ENCODE measurements at regions of chr15 and their contacts with region 1.

Region 1: DNA sequence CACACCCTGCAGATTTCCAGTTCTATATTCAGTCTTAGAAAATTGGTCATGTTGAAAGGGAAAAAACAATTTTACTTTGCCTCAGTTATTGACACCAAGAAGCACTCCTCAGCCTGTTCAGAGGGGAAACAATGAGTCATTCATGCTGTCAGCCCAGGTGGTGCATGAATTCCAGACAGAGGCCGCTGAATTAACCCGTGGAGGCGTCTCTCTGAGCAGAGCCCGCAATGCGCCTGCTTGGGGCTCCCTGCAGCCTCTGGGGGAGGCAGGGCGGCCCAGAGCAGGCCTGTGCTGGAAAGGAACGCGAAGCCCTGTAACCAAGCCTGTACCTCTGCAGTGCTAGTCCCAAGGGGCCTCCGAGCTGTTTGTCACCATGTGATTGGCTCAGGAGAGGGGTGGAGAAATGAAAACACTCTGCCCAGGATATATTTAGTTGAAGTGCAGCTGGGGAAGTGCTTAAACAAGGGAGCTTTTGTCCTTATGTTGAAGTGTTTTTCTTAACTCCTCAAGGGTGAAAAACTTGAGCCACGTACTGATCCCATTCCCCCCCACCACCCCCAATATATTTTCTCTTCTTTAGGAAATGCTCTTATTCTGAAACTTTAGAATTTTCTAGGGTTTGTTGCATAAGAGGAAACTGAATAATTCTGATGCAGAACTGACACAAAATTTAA is 68.3 kb upstream of the CHD2 start:
- DNase-seq: peak; percentile 72 to 96 (median 90)
- ATAC-seq: peak; percentile 93
- H3K4me3 ChIP-seq: peak overlapping the region; percentile 15 to 41
- H3K4me3 Mint-ChIP-seq: peak overlapping the region; percentile 72
- H3K27ac ChIP-seq: peak overlapping the region; percentile 67 to 80
- H3K27ac Mint-ChIP-seq: peak overlapping the region; percentile 96
- H3K4me1 ChIP-seq: peaks cover 42% of the 10 kb centered on the region
- H3K4me1 Mint-ChIP-seq: peaks cover 44% of the 10 kb centered on the region
- H3K27me3 ChIP-seq: no peaks in the 10 kb centered on the region
- H3K27me3 Mint-ChIP-seq: no peaks in the 10 kb centered on the region
- CTCF ChIP-seq: no peak

Region 2: GRCh38 chr15:92820236-92821021 is 11.4 kb before region 1 on chr15:
- CTCF ChIA-PET with region 1: interaction called, 10 read pairs
- POLR2A ChIA-PET with region 1: interaction called, 28 read pairs
- intact Hi-C with region 1: loop called (anchors 1 kb)
- DNase-seq: peak; percentile 64 to 94 (median 85)
- ATAC-seq: peak; percentile 88
- H3K4me3 ChIP-seq: peak overlapping the region; percentile 57 to 64
- H3K4me3 Mint-ChIP-seq: peak overlapping the region; percentile 87
- H3K27ac ChIP-seq: peak overlapping the region; percentile 69 to 75
- H3K27ac Mint-ChIP-seq: peak overlapping the region; percentile 94
- H3K4me1 ChIP-seq: peaks cover 47% of the 10 kb centered on the region
- H3K4me1 Mint-ChIP-seq: peaks cover 52% of the 10 kb centered on the region
- H3K27me3 ChIP-seq: no peaks in the 10 kb centered on the region
- H3K27me3 Mint-ChIP-seq: no peaks in the 10 kb centered on the region
- CTCF ChIP-seq: no peak

Region 3: DNA sequence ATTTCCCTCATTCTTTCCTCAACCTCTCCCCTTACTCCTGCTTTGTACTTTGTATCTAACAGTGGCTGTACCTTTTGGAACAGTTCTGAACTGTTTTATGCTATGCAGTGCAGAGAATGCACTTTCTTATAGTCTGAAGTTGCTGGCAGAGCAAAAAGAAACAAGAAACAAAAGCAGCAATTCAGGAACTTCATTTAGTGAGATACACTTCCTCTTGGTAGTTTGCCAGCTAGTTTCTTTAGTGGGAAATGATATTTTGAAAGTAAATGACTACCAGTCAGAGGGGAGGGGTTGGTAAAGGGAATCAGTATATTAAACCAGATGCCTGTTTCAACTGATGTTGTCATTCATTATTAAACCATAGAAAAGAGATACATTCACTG is 13.3 kb after region 1 on chr15:
- CTCF ChIA-PET with region 1: interaction called, 3 read pairs
- POLR2A ChIA-PET with region 1: interaction called, 23 read pairs
- intact Hi-C with region 1: loop called (anchors 1 kb)
- DNase-seq: peak in 2 of 9 experiments; percentile 57 to 79
- ATAC-seq: peak; percentile 34
- H3K4me3 ChIP-seq: peak overlapping the region in 1 of 2 experiments; percentile 4
- H3K4me3 Mint-ChIP-seq: peak overlapping the region; percentile 72
- H3K27ac ChIP-seq: peak overlapping the region; percentile 23 to 46
- H3K27ac Mint-ChIP-seq: peak overlapping the region; percentile 93
- H3K4me1 ChIP-seq: peaks cover 71% of the 10 kb centered on the region
- H3K4me1 Mint-ChIP-seq: peaks cover 75% of the 10 kb centered on the region
- H3K27me3 ChIP-seq: no peaks in the 10 kb centered on the region
- H3K27me3 Mint-ChIP-seq: no peaks in the 10 kb centered on the region
- CTCF ChIP-seq: no peak

Region 4: DNA sequence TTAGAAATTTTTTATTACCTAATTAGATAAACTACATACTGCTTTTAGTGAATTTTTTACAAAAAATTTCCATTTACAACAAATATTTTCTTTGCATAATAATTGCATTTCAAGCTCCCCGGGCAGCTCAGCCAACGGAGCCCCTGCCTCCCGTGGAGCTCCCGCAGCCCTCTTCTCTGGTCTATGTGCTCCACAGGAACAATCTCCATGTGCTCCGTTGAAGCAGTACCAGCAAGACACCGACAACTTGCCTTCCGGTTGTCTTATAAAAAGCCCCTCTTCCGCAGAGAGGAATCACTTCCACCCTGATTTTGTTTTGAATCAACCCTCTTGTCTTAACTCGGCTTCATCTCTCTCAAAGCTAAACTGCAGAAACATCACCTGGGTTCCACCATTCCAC is 21.4 kb after region 1 on chr15:
- CTCF ChIA-PET with region 1: interaction called, 3 read pairs
- POLR2A ChIA-PET with region 1: interaction called, 23 read pairs
- intact Hi-C with region 1: loop called (anchors 1 kb)
- DNase-seq: no peak
- ATAC-seq: no peak
- H3K4me3 ChIP-seq: no peak overlapping the region
- H3K4me3 Mint-ChIP-seq: no peak overlapping the region
- H3K27ac ChIP-seq: no peak overlapping the region
- H3K27ac Mint-ChIP-seq: no peak overlapping the region
- H3K4me1 ChIP-seq: peaks cover 30% of the 10 kb centered on the region
- H3K4me1 Mint-ChIP-seq: peaks cover 32% of the 10 kb centered on the region
- H3K27me3 ChIP-seq: no peaks in the 10 kb centered on the region
- H3K27me3 Mint-ChIP-seq: no peaks in the 10 kb centered on the region
- CTCF ChIP-seq: no peak

Region 5: DNA sequence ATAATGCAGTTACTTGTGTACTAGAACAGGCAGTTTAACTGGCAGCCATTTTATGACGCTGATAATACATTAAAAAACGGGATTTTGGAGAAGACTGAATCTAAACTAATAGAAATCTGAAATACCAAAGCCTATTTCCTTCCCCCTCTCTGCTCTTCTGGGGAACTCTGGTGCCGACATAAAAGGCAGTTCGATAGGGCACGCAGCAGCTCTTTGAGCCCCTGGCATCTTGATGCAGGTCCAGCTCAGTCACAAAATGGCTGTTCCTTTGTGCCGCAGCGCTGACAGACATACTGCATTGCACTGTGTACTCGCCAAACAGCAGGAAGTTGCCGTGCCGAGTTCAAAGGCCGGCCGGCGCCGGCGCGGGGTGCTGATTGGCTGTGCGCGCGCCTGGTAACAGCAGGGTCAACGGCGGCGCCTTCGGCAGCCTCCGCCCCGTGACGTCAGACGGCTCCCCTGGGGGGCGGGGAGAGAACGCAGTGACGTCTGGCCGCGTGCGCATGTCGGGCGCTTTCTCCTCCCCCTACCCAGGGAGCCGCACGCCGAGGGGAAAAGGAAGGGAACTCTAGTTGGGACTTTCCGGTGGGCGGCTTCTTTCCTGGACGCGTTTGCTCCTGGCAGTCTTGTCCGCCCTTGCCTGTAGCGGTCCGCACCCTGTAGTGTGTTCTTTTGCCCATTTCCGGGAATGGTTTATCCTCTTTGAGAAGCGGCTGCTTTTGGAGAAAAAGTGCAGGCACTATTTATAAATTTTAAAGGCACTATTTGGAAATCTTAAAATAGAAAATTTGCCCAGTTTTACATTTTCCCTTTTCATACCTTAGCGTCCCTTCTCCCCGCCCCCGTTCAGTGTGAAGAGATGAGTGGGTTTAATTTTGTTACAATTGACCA is 72.4 kb after region 1 on chr15:
- CTCF ChIA-PET with region 1: interaction called, 8 read pairs
- POLR2A ChIA-PET with region 1: interaction called, 25 read pairs
- intact Hi-C with region 1: loop called in 1 of 2 experiments (anchors 1 kb)
- DNase-seq: peak; percentile 98 to 99 (median 99)
- ATAC-seq: peak; percentile 77
- H3K4me3 ChIP-seq: peak overlapping the region; percentile 75 to 88
- H3K4me3 Mint-ChIP-seq: peak overlapping the region; percentile 94
- H3K27ac ChIP-seq: peak overlapping the region; percentile 95 to 99
- H3K27ac Mint-ChIP-seq: peak overlapping the region; percentile 99
- H3K4me1 ChIP-seq: peaks cover 60% of the 10 kb centered on the region
- H3K4me1 Mint-ChIP-seq: peaks cover 58% of the 10 kb centered on the region
- H3K27me3 ChIP-seq: no peaks in the 10 kb centered on the region
- H3K27me3 Mint-ChIP-seq: no peaks in the 10 kb centered on the region
- CTCF ChIP-seq: no peak

Region 6: GRCh38 chr15:92954578-92954977 is 122.8 kb after region 1 on chr15:
- CTCF ChIA-PET with region 1: no interaction called
- POLR2A ChIA-PET with region 1: no interaction called
- intact Hi-C with region 1: no loop called
- DNase-seq: peak in 2 of 9 experiments; percentile 17 to 34
- ATAC-seq: no peak
- H3K4me3 ChIP-seq: no peak overlapping the region
- H3K4me3 Mint-ChIP-seq: no peak overlapping the region
- H3K27ac ChIP-seq: no peak overlapping the region
- H3K27ac Mint-ChIP-seq: no peak overlapping the region
- H3K4me1 ChIP-seq: peaks cover 3% of the 10 kb centered on the region
- H3K4me1 Mint-ChIP-seq: peaks cover 31% of the 10 kb centered on the region
- H3K27me3 ChIP-seq: no peaks in the 10 kb centered on the region
- H3K27me3 Mint-ChIP-seq: no peaks in the 10 kb centered on the region
- CTCF ChIP-seq: peak; percentile 36

Region 7: DNA sequence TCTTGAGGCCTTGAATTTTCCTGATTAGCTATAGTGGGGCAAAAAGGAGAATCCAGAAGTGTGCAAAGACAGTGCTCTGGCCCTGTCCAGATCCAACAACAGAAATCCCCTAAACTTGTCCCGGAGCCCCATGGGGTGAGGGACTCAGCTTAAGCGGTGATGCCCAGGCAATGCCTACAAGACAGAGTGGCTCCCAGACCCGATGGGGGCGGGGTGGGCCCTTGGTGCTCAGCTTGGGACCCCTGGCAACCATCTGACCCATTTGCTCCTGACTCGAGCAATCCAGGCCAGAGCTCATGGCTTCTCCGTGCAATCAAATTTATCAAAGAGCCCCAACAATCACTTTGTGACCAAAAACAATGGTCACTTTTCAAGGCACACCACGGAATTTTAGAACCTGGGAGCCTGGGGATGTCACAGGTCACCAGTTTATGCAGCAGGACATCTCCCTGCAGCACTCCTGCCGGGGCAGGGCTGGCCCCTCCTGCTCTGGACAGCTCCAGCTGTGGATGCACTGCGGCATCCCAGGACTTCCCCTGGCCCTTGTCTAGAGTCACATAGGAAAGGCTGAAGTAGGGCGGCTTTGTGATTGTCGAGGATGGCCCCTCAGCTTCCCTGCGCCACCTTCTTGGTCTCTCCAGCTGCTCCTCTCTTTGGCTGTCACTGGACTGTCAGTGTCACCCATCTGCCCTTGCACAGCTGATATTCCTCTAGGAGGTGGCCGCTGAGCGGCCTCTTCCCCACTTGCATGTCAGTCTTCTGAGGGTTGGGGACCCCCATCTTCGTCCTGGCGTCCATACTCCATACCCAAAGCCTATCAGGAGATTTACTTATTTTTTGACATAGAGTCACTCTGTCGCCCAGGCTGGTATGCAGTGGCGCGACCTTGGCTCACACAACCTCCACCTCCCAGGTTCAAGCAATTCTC is 228.8 kb after region 1 on chr15:
- CTCF ChIA-PET with region 1: no interaction called
- POLR2A ChIA-PET with region 1: no interaction called
- intact Hi-C with region 1: no loop called
- DNase-seq: no peak
- ATAC-seq: no peak
- H3K4me3 ChIP-seq: no peak overlapping the region
- H3K4me3 Mint-ChIP-seq: no peak overlapping the region
- H3K27ac ChIP-seq: no peak overlapping the region
- H3K27ac Mint-ChIP-seq: no peak overlapping the region
- H3K4me1 ChIP-seq: no peaks in the 10 kb centered on the region
- H3K4me1 Mint-ChIP-seq: peaks cover 5% of the 10 kb centered on the region
- H3K27me3 ChIP-seq: no peaks in the 10 kb centered on the region
- H3K27me3 Mint-ChIP-seq: peaks cover 9% of the 10 kb centered on the region
- CTCF ChIP-seq: no peak

Measured in CD8-positive, alpha-beta T cell (primary cell).